ENCODE measurements at regions of chrX and their contacts with region 1.

Region 1: GRCh38 chrX:123720483-123720882 is 12.4 kb downstream of the THOC2 start:
- DNase-seq: no peak
- ATAC-seq: no peak
- H3K4me3 ChIP-seq: no peak overlapping the region
- H3K27ac ChIP-seq: no peak overlapping the region
- H3K4me1 ChIP-seq: no peaks in the 10 kb centered on the region
- H3K27me3 ChIP-seq: no peaks in the 10 kb centered on the region
- CTCF ChIP-seq: no peak
- POLR2A ChIP-seq: no peak
- RAD21 ChIP-seq: no peak

Region 2: GRCh38 chrX:123626962-123627361 is 93.5 kb before region 1 on chrX:
- CTCF ChIA-PET with region 1: no interaction called
- POLR2A ChIA-PET with region 1: no interaction called
- dilution Hi-C with region 1: no loop called
- in situ Hi-C with region 1: no loop called
- intact Hi-C with region 1: no loop called
- DNase-seq: peak; percentile 68
- ATAC-seq: peak; percentile 82
- H3K4me3 ChIP-seq: no peak overlapping the region
- H3K27ac ChIP-seq: no peak overlapping the region
- H3K4me1 ChIP-seq: peaks cover 1% of the 10 kb centered on the region; the same call in 1 of the 2 replicates
- H3K27me3 ChIP-seq: no peaks in the 10 kb centered on the region
- CTCF ChIP-seq: no peak
- POLR2A ChIP-seq: no peak
- RAD21 ChIP-seq: no peak

Region 3: GRCh38 chrX:123698979-123699520 is 21.4 kb before region 1 on chrX:
- CTCF ChIA-PET with region 1: no interaction called
- POLR2A ChIA-PET with region 1: interaction called, 11 read pairs
- dilution Hi-C with region 1: no loop called
- in situ Hi-C with region 1: no loop called
- intact Hi-C with region 1: no loop called
- DNase-seq: peak; percentile 1
- ATAC-seq: no peak
- H3K4me3 ChIP-seq: no peak overlapping the region
- H3K27ac ChIP-seq: no peak overlapping the region
- H3K4me1 ChIP-seq: no peaks in the 10 kb centered on the region
- H3K27me3 ChIP-seq: no peaks in the 10 kb centered on the region
- CTCF ChIP-seq: no peak
- POLR2A ChIP-seq: no peak
- RAD21 ChIP-seq: no peak

Region 4: GRCh38 chrX:124010157-124010556 is 289.7 kb after region 1 on chrX:
- CTCF ChIA-PET with region 1: no interaction called
- POLR2A ChIA-PET with region 1: no interaction called
- dilution Hi-C with region 1: no loop called
- in situ Hi-C with region 1: no loop called
- intact Hi-C with region 1: no loop called
- DNase-seq: peak; percentile 7
- ATAC-seq: no peak
- H3K4me3 ChIP-seq: no peak overlapping the region
- H3K27ac ChIP-seq: no peak overlapping the region
- H3K4me1 ChIP-seq: no peaks in the 10 kb centered on the region
- H3K27me3 ChIP-seq: no peaks in the 10 kb centered on the region
- CTCF ChIP-seq: no peak
- POLR2A ChIP-seq: no peak
- RAD21 ChIP-seq: no peak

Measured in IMR-90 (cell line).